ENCODE measurements at regions of chr7 and their contacts with region 1.

Region 1: GRCh38 chr7:5997222-5997808 is 11.5 kb downstream of the PMS2 start:
- DNase-seq: peak; percentile 58
- H3K4me3 ChIP-seq: no peak overlapping the region
- H3K27ac ChIP-seq: peak overlapping the region in 1 of 4 donors; percentile 52
- H3K4me1 ChIP-seq: peaks cover 0 to 5% (median 0%) of the 10 kb centered on the region in 4 donors
- H3K27me3 ChIP-seq: no peaks in the 10 kb centered on the region
- CTCF ChIP-seq: peak; percentile 50 to 64 (median 60)
- EP300 ChIP-seq: no peak
- POLR2A ChIP-seq: no peak

Region 2: GRCh38 chr7:5872326-5872725 is 125.0 kb before region 1 on chr7:
- in situ Hi-C with region 1: loop called in 2 of 4 experiments (anchors 25 kb)
- intact Hi-C with region 1: no loop called
- DNase-seq: no peak
- H3K4me3 ChIP-seq: no peak overlapping the region
- H3K27ac ChIP-seq: no peak overlapping the region
- H3K4me1 ChIP-seq: no peaks in the 10 kb centered on the region
- H3K27me3 ChIP-seq: no peaks in the 10 kb centered on the region
- CTCF ChIP-seq: no peak
- EP300 ChIP-seq: no peak
- POLR2A ChIP-seq: no peak

Region 3: DNA sequence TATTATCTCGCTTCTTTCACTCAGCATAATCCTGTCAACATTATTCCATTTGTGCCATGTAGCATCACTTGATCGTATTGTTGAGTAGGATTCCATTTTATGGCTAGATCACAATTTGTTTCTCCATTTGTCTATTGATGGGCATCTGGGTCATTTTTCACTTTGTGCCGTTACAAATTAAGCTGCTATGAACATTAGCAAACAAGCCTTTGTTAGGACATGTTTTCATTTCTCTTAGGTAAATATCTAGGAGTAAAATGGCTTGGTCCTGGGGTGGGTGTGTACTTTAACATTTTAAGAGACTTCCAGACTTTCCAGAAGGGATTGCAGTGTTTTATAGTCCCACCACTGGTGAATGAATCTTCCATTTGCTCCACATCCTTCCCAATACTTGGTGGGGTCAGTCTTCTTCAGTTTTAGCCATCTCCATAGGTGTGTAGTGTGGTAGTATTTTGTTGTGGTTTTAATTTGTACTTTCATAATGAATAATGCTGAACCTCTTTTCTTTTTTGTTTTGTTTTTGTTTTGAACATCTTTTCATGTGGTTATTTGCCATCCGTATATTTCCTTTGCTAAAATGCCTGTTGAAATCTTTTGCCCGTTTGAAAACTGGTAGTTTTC is 120.1 kb after region 1 on chr7:
- in situ Hi-C with region 1: loop called in 2 of 4 experiments (anchors 10 kb)
- intact Hi-C with region 1: no loop called
- DNase-seq: no peak
- H3K4me3 ChIP-seq: no peak overlapping the region
- H3K27ac ChIP-seq: no peak overlapping the region
- H3K4me1 ChIP-seq: no peaks in the 10 kb centered on the region
- H3K27me3 ChIP-seq: no peaks in the 10 kb centered on the region
- CTCF ChIP-seq: no peak
- EP300 ChIP-seq: no peak
- POLR2A ChIP-seq: no peak

Region 4: DNA sequence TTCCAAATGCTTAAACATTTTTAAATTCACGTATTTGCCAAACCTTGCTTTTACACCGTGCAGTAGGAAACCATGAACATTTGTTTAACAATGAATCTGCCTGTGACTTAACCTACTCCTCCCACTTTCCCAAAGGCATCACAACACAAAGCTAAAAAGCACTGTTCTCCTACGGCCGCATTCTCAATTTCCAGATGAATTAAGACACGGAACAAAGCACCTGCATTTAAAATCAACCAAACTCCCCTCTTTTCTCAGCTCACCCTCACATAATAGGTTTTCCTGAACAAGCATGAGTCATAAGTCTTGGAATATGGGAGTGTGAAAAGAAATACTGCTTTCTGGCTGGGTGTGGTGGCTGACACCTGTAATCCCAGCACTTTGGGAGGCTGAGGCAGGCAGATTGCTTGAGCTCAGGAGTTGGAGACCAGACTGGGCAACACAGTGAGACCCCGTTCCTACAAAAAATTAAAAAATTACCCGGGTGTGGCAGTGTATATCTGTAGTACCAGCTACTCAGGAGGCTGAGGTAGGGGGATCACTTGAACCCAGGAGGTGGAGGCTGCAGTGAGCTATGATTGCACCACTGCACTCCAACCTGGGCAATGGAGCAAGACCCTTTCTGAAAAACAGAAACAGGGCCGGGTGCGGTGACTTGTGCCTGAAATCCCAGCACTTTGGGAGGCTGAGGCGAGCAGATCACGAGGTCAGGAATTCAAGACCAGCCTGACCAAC is 326.8 kb after region 1 on chr7:
- in situ Hi-C with region 1: loop called in 2 of 4 experiments (anchors 10 kb)
- intact Hi-C with region 1: no loop called
- DNase-seq: no peak
- H3K4me3 ChIP-seq: no peak overlapping the region
- H3K27ac ChIP-seq: no peak overlapping the region
- H3K4me1 ChIP-seq: peaks cover 0 to 3% (median 1%) of the 10 kb centered on the region in 4 donors
- H3K27me3 ChIP-seq: no peaks in the 10 kb centered on the region
- CTCF ChIP-seq: no peak
- EP300 ChIP-seq: no peak
- POLR2A ChIP-seq: no peak

Region 5: DNA sequence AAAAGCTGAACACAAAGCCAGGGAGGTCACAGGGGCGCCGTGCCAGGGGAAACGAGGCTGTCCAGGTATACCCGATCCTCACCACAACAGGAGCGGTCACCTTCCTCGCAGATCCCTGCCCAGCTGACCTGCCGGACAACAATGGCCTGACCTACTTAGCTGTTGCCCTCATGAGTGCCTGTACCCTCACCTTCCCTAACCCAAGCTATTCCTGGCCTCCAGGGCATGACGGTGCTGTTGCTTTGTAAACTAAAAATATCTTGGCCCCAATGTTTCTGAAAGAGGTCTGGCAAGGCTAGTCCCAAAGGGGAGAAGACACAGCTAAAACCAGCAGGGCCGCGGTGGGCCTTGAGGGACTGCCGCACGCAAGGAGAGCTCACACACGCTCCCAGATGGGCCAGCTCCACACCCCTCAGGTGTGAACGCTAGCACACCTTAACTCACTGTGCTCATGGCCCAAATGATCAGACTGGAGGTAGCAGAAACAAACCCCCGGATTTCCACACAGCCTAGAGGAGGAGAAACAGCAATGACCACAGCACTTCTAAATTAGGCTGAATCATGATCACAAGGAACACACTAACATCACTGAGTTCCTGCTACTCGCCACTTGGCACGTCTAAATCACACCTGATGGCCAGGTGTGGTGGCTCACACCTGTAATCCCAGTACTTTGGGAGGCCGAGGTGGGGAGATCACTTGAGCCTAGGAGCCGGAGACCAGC is 341.4 kb after region 1 on chr7:
- in situ Hi-C with region 1: loop called in 1 of 4 experiments (anchors 10 kb)
- intact Hi-C with region 1: no loop called
- DNase-seq: no peak
- H3K4me3 ChIP-seq: no peak overlapping the region
- H3K27ac ChIP-seq: no peak overlapping the region
- H3K4me1 ChIP-seq: no peaks in the 10 kb centered on the region
- H3K27me3 ChIP-seq: no peaks in the 10 kb centered on the region
- CTCF ChIP-seq: no peak
- EP300 ChIP-seq: no peak
- POLR2A ChIP-seq: no peak